MCF 10A (cell line): ENCODE measurements at regions of chr13 and their contacts with region 1.

Region 1: GRCh38 chr13:53782488-53782961 is 753.9 kb downstream of the OLFM4 start:
- DNase-seq: peak; percentile 69
- H3K4me3 Mint-ChIP-seq: peak overlapping the region; percentile 58
- H3K27ac Mint-ChIP-seq: no peak overlapping the region
- H3K4me1 Mint-ChIP-seq: peaks cover 5% of the 10 kb centered on the region
- H3K27me3 Mint-ChIP-seq: peaks cover 33% of the 10 kb centered on the region
- CTCF ChIP-seq: peak; percentile 79

Region 2: DNA sequence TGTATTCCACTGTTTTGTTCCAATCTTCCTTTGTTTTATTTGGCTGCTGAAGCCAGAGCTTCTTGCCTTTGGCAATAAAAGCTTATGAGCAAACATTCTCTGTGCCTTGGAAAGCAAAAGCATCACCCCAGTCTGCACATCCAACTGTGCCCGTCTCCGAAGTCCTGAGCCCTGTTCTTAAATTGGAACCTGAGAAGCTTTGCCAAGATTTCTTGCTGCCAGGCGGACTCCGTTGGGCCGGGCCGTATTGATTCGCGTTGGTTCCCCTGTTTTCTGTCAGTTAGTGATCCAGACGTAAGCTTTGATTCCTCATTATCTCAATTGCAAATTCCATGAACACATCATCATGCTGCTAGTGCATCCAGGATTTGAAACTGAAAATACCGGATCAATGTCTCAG is 39.1 kb after region 1 on chr13:
- CTCF ChIA-PET with region 1: no interaction called
- POLR2A ChIA-PET with region 1: no interaction called
- intact Hi-C with region 1: no loop called
- DNase-seq: peak; percentile 14
- H3K4me3 Mint-ChIP-seq: no peak overlapping the region
- H3K27ac Mint-ChIP-seq: no peak overlapping the region
- H3K4me1 Mint-ChIP-seq: no peaks in the 10 kb centered on the region
- H3K27me3 Mint-ChIP-seq: peaks cover 29% of the 10 kb centered on the region
- CTCF ChIP-seq: no peak

Region 3: GRCh38 chr13:54536112-54536511 is 753.6 kb after region 1 on chr13:
- CTCF ChIA-PET with region 1: no interaction called
- POLR2A ChIA-PET with region 1: no interaction called
- intact Hi-C with region 1: loop called (anchors 1 kb)
- DNase-seq: peak; percentile 18
- H3K4me3 Mint-ChIP-seq: no peak overlapping the region
- H3K27ac Mint-ChIP-seq: no peak overlapping the region
- H3K4me1 Mint-ChIP-seq: no peaks in the 10 kb centered on the region
- H3K27me3 Mint-ChIP-seq: peaks cover 5% of the 10 kb centered on the region
- CTCF ChIP-seq: no peak

Region 4: DNA sequence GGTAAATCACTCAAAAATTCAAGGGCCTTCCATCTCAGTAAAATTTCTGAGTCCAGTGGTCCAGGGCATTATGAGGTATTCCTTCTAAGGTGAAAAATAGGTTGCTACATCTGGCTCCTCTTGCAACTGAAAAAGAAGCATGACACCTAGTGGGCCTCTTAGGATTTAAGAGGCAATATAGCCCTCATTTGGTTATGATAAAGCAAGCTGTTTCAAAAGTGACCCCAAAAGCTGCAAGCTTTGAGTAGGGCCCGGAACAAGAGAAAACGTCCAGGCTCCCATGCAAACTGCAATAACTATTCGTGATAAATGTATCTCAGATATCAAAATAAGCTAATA is 1448.0 kb after region 1 on chr13:
- CTCF ChIA-PET with region 1: interaction called, 3 read pairs
- POLR2A ChIA-PET with region 1: no interaction called
- intact Hi-C with region 1: loop called (anchors 5 kb)
- DNase-seq: peak; percentile 2
- H3K4me3 Mint-ChIP-seq: no peak overlapping the region
- H3K27ac Mint-ChIP-seq: no peak overlapping the region
- H3K4me1 Mint-ChIP-seq: no peaks in the 10 kb centered on the region
- H3K27me3 Mint-ChIP-seq: no peaks in the 10 kb centered on the region
- CTCF ChIP-seq: no peak